Uterus (tissue), 4 donors: ENCODE measurements at regions of chr10 and their contacts with region 1.

Region 1: DNA sequence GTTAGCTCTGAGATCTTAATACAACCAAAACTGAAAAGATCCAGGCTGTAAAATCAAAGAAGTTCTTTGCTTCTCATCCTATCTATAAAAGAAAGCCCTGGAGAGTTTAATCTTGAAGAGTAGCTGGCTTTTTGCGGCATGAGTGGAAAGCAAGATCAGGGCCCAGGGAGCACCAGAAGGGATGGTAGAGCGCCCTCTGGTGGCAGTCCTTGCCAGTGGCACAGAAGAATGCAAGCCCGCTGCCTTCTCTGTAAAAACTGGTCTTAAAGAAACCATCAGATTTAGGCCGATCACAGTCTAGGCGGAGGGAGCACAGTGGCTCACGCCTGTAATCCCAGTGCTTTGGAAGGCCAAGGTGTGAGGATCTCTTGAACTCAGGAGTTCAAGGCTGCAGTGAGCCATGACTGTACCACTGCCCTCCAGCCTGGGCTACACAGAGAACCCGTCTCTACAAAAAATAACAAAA is 35.6 kb downstream of the CPN1 start:
- DNase-seq: peak; percentile 86 to 88
- H3K4me3 ChIP-seq: no peak overlapping the region
- H3K27ac ChIP-seq: peak overlapping the region; percentile 36 to 54
- H3K4me1 ChIP-seq: no peaks in the 10 kb centered on the region
- H3K27me3 ChIP-seq: no peaks in the 10 kb centered on the region
- CTCF ChIP-seq: peak; percentile 84 to 94 (median 91)
- POLR2A ChIP-seq: no peak

Region 2: DNA sequence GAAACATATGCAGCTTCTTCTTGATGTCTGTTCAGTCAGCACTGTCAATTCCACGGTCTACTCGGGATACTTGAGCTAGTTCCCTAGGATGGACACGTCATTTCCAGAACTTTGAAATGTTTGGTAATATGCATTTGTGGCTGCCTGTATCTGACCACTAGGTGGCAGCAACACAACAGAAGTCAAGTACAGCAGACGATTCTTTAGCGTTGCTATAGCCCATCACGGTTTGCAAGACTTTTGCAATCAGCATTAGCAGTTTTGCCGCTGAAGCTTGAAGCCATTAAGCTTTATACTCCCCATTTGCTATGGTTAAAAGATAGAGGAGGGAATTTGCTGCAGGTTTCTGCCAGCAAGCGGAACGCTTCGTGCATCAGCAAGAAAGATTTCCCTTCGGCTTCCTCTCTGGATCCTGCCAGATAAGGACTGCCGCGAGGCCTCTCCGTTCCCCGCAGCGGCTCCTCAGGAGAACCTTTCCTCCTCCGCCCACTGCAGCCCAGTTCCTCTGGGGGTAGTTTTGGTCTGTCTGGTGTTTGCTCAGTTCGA is 200.1 kb before region 1 on chr10:
- intact Hi-C with region 1: loop called (anchors 5 kb)
- DNase-seq: peak; percentile 76 to 89
- H3K4me3 ChIP-seq: peak overlapping the region; percentile 21 to 23
- H3K27ac ChIP-seq: peak overlapping the region; percentile 55 to 64
- H3K4me1 ChIP-seq: no peaks in the 10 kb centered on the region
- H3K27me3 ChIP-seq: no peaks in the 10 kb centered on the region
- CTCF ChIP-seq: peak; percentile 90 to 96 (median 96)
- POLR2A ChIP-seq: no peak

Region 3: DNA sequence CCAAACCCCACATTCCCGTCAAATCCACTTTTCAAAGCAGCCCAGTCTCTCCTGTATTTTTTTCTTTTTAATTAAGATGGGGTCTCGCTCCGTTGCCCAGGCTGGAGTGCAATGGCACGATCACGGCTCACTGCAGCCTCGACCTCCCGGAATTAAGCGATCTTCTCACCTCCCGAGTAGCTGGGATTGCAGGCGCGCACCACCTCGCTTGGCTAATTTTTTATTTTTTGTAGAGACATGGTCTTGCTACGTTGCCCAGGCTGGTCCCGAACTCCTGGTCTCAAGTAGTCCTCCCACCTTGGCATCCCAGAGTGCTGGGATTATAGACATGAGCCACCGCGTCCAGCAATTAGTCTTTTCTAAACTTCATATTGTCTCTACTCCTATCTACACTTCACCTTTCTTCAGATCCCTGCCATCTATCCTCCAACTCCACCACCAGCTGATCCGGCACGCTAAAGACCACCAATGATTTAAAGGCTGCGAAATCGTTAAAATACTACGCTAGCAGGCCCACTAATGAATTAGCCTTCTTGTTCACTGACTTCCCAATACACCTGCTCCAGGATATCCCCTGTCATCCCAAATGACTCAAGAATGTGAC is 183.9 kb after region 1 on chr10:
- intact Hi-C with region 1: no loop called
- DNase-seq: no peak
- H3K4me3 ChIP-seq: peak overlapping the region; percentile 48 to 97
- H3K27ac ChIP-seq: peak overlapping the region; percentile 68 to 79
- H3K4me1 ChIP-seq: peaks cover 0 to 4% of the 10 kb centered on the region in 2 donors
- H3K27me3 ChIP-seq: no peaks in the 10 kb centered on the region
- CTCF ChIP-seq: no peak
- POLR2A ChIP-seq: no peak